ENCODE measurements at regions of chr1 and their contacts with region 1.

Region 1: GRCh38 chr1:209627732-209628196 is 24.5 kb downstream of the LAMB3 start:
- H3K4me3 Mint-ChIP-seq: no peak overlapping the region
- H3K27ac Mint-ChIP-seq: peak overlapping the region; percentile 82
- H3K4me1 Mint-ChIP-seq: peaks cover 40% of the 10 kb centered on the region
- H3K27me3 Mint-ChIP-seq: peaks cover 30% of the 10 kb centered on the region

Region 2: DNA sequence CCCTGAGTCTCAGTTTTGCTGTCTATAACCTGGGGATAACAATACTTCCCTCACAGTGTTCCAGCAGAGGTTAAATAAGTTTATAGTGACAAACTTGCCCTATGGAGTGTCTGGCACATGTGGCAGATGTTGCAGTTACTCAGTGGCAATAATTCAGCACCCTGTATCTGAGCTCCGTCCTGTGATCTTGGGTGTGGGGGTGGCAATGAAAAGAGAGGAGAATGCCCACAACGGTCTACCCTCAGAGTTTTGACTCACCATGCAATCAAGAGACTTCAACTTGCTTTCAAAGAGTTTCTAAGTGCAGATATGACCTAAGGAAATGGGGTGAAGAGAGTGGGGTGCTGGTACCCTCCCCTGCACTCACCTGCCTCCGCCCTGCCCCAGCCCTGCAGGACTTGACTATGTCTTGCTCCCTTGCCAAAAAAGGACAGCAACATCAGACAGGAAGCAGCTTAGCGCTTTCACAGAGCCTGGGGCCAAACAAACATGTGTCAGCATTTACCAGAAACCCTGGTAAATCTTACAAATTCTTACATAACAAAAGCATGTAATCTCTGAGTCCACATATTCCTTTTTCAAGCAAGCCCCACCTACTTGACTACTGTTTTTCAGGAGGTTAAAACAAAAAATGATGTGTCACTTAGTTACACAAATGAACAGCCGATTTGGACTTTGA is 229.3 kb before region 1 on chr1:
- intact Hi-C with region 1: no loop called
- H3K4me3 Mint-ChIP-seq: no peak overlapping the region
- H3K27ac Mint-ChIP-seq: peak overlapping the region; percentile 44
- H3K4me1 Mint-ChIP-seq: peaks cover 34% of the 10 kb centered on the region
- H3K27me3 Mint-ChIP-seq: peaks cover 8% of the 10 kb centered on the region

Region 3: DNA sequence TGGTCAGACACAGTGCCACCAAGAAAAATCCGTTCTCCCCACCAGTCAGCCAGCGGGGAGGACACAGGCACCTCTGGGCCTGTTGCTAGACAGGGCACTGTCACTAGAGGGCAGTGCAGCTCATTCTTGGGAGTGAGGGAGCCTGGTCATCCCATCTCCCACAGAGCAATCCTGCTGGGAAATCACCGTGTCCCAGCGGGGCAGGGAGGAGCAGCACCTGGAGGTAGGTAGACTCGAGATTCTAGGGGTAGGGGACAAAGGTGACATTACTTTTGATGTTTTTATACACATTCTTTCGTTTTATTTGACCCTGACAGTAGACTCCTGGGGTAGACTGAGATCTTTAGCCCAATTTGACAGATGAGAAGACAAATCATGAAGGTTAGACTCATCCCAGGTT is 51.0 kb before region 1 on chr1:
- intact Hi-C with region 1: loop called (anchors 2 kb)
- H3K4me3 Mint-ChIP-seq: no peak overlapping the region
- H3K27ac Mint-ChIP-seq: no peak overlapping the region
- H3K4me1 Mint-ChIP-seq: peaks cover 5% of the 10 kb centered on the region
- H3K27me3 Mint-ChIP-seq: peaks cover 39% of the 10 kb centered on the region

Region 4: GRCh38 chr1:209601809-209602657 is 25.7 kb before region 1 on chr1:
- intact Hi-C with region 1: loop called (anchors 2 kb)
- H3K4me3 Mint-ChIP-seq: no peak overlapping the region
- H3K27ac Mint-ChIP-seq: no peak overlapping the region
- H3K4me1 Mint-ChIP-seq: no peaks in the 10 kb centered on the region
- H3K27me3 Mint-ChIP-seq: peaks cover 19% of the 10 kb centered on the region

Region 5: DNA sequence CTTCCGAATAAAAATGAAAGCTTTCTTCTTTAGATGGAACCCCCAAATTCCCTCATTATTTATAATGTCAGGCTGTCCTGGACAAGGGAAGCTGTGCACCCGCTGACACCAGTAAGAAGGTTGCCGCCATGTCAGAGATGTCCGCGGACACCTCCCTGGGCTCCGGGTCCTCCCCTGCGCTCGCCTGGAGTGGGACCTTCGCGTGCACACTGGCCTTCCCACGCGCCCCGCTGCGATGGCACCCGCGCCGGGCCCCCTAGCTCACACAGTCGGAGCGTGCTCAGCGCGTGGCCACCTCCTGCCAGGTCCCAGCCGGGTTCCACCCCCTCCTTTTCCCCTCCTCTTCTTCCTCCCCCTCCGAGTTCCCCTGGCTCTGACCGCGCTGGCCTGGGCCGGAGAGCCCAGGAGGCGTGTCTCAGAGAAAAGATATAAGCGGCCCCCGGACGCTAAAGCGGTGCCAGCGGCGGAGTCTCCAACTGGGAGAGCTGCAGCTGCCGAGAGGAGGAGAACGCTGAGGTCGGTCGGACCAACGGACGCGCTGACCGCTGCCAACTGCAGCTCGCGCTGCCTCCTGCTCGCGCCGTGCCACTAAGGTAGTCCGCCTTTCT is 47.3 kb after region 1 on chr1 and contains the start of gene G0S2:
- intact Hi-C with region 1: loop called (anchors 5 kb)
- H3K4me3 Mint-ChIP-seq: peak within 1 kb of the TSS; percentile 67
- H3K27ac Mint-ChIP-seq: peak within 1 kb of the TSS; percentile 42
- H3K4me1 Mint-ChIP-seq: peaks cover 66% of the 10 kb centered on the region
- H3K27me3 Mint-ChIP-seq: peaks cover 55% of the 10 kb centered on the region

Region 6: DNA sequence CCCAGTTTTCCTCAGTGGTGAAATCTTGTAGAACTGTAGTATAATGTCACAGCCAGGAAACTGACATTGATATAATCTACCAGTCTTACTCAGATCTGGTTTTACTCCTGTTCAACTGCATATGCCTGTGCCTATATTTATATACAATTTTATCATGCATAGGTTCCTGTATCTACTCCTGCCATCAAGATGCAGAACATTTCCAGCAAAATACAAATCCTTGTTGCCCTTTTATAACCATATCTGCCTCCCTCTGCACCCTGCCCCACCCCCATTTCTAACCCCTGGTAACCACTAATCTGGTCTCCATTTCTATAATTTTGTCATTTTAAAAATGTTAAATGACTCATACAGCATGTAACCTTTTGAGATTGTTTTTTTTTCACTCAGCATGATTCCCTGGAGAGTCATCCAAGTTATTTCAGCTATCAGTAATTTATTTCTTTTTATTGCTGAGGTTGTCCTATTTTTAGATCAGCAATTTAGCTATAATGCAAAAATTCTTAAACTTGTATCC is 208.1 kb after region 1 on chr1:
- intact Hi-C with region 1: no loop called
- H3K4me3 Mint-ChIP-seq: no peak overlapping the region
- H3K27ac Mint-ChIP-seq: no peak overlapping the region
- H3K4me1 Mint-ChIP-seq: peaks cover 3% of the 10 kb centered on the region
- H3K27me3 Mint-ChIP-seq: no peaks in the 10 kb centered on the region

Measured in dendritic cell treated with granulocyte-macrophage colony-stimulating factor and Interleukin-4, amounts not matched to agents 40 ng/mL and 50 ng/mL, for 4 days (primary cell).